Activated CD4-positive, alpha-beta T cell treated with anti-CD3 and anti-CD28 coated beads, Interleukin-2, amount 10 ng/mL, durations not matched to agents 24 days and 14 days (primary cell): ENCODE measurements at regions of chr7 and their contacts with region 1.

Region 1: GRCh38 chr7:101321491-101322401 is at the start of gene IFT22:
- DNase-seq: peak; percentile 96
- H3K4me3 Mint-ChIP-seq: peak within 1 kb of the TSS; percentile 91
- H3K27ac Mint-ChIP-seq: peak within 1 kb of the TSS; percentile 86
- H3K4me1 Mint-ChIP-seq: peaks cover 11% of the 10 kb centered on the region
- H3K27me3 Mint-ChIP-seq: peaks cover 7% of the 10 kb centered on the region
- total RNA-seq, gene IFT22: 5.9 and 6.6 TPM in 2 replicates

Region 2: DNA sequence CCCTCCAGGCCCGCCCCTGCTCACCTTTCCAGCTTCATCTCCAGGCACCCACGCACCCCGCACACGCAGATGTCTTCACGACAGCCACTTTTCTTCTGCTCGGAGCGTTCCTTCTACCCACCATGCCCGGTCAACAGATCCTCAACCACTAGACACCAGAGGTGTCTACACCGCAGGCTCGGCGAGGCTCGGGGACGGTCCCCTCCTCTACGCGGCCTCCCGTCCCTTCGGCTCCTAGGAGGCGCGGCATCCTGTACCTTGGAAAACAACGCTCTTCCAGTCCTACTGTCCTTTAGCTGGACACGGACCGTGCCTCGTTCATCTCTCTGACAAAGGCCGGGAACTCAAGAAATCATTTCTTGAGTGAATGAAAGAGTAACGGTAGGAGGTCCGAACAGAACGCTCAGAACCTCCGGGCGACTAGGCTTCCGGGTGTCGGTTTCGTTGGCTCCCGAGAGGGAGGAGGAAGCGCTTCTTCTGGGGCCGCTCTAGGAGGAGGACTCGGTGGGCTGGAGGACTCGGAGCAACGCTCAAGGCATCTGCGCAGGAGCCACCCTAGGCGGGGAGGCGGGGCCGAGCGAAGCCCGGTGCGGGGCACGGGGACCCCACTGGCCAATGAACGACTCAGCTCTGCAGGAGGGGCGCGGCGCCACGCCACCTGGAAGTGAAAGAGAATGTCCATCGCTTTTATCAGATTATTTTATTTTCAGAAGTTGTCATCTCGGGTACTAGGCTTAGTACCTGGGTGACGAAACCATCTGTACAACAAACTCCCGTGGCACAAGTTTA is 69.7 kb before region 1 on chr7:
- intact Hi-C with region 1: loop called (anchors 5 kb)
- DNase-seq: peak; percentile 100
- H3K4me3 Mint-ChIP-seq: peak overlapping the region; percentile 97
- H3K27ac Mint-ChIP-seq: peak overlapping the region; percentile 95
- H3K4me1 Mint-ChIP-seq: peaks cover 17% of the 10 kb centered on the region
- H3K27me3 Mint-ChIP-seq: peaks cover 2% of the 10 kb centered on the region

Region 3: GRCh38 chr7:101342892-101343291 is 21.1 kb after region 1 on chr7:
- intact Hi-C with region 1: no loop called
- DNase-seq: no peak
- H3K4me3 Mint-ChIP-seq: no peak overlapping the region
- H3K27ac Mint-ChIP-seq: no peak overlapping the region
- H3K4me1 Mint-ChIP-seq: no peaks in the 10 kb centered on the region
- H3K27me3 Mint-ChIP-seq: no peaks in the 10 kb centered on the region